Right ventricle myocardium inferior (tissue), 1 donor: ENCODE measurements at regions of chr12 and their contacts with region 1.

Region 1: GRCh38 chr12:45292486-45293195 is 76.7 kb downstream of the ANO6 start:
- DNase-seq: no peak
- ATAC-seq: peak; percentile 75

Region 2: DNA sequence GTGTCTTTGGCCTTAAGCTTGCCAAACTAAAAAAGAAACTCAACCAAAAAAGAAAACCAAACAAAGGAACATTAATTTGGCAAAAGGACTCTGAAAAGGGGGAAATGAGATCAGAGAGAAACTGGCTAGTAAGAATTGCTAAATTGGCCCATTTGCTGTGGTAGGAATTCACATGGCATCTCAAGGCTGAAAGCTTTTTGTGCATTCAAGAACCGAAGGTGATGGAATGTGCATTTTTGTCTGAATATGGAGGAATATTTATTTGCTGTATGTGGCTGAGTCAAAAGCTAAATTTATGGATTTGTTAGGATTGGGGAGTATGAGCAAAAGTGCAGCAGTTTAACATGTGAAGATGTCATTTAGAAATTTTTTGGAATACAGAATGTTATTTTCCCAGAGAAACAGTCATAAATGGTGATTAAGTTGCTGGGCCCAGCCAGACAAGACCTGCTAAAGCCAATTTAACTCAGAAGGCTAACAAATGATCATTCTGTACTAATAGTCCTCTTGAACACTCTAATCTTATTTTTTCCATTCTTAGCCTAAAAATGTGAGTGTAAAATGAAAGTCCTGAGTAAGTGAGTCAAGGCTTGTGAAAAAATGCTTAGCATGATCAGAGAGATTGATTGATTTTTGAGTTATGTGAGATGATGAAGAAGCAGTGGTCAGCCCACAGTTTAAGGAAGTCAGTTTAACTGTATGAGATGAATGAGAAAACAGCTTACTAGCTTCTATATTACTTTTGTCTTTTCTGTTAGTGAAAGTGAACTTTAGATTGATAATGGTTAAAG is 17.4 kb after region 1 on chr12:
- intact Hi-C with region 1: no loop called
- DNase-seq: no peak
- ATAC-seq: no peak

Region 3: DNA sequence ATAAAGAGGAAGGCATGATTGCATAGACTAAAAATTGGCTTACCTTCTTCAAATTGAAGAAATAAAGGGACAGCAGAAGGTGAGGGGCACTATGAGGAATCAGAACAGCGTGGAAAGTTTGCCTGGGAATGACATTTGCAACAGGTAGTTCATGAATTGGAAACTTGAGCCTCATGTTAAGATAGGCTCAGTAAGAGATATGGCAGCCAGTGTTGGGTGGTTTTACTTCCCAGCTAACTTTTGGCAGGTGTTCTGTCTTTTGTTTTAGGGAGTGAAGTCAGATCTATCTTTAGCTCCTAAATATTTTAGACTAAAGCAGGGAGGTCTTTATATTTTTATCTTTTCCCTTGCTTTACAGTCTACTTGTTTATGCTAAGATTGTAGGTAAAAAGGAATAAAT is 45.6 kb after region 1 on chr12:
- intact Hi-C with region 1: loop called (anchors 2 kb)
- DNase-seq: no peak
- ATAC-seq: peak; percentile 81